Thyroid gland (tissue), 4 donors: ENCODE measurements at regions of chr20 and their contacts with region 1.

Region 1: DNA sequence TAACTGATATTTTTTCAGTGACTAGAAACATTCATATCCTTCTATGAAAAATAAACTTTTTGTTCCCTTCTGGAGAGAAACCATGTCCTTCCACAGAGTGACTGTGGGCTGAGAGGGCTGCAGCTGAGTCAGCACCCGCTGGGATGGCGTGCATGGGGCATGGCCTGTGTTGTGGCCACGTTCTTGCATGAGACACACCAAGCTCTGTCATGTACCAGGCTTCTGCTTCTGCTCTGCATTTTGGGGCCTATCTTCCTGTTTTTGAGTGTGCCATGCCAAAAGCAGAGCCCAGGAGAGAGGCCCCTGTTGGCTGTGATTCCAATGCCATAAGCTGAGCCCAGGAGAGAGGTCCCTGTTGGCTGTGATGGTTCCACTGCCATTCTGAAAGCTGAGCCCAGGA is 10.8 kb downstream of the APMAP start:
- DNase-seq: no peak
- H3K4me3 ChIP-seq: no peak overlapping the region
- H3K27ac ChIP-seq: peak overlapping the region in 1 of 3 donors; percentile 84
- H3K4me1 ChIP-seq: peaks cover 36 to 66% of the 10 kb centered on the region in 2 donors
- H3K27me3 ChIP-seq: no peaks in the 10 kb centered on the region
- CTCF ChIP-seq: no peak
- POLR2A ChIP-seq: no peak

Region 2: DNA sequence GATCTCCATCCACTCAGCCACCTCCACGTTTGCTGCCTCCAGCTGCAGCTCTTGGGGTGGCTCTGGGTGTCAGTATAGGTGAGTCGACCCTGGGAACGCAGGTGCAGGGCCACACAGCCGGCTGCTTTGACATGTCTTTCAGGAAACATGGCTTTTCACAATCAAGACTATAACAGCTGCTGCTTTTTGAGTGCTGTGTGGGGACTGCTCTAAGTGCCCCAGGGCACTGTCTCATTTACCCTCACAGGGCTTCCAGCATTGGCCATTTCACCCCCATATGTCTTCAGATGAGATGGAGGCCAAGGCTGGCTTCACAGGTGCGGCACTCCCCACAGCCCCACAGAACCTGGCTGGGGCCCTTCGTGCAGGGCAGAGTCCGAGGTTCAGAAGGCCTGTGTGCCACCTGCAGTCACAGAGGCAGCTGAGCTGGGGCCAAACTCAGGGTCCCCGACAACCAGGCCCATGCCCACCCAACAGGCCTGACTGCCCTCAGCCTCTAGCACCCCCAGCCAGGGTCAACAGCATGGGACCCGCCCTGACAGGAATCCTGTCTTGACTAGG is 47.6 kb before region 1 on chr20:
- intact Hi-C with region 1: loop called (anchors 10 kb)
- DNase-seq: no peak
- H3K4me3 ChIP-seq: no peak overlapping the region
- H3K27ac ChIP-seq: no peak overlapping the region
- H3K4me1 ChIP-seq: peaks cover 21% of the 10 kb centered on the region in 2 donors
- H3K27me3 ChIP-seq: no peaks in the 10 kb centered on the region
- CTCF ChIP-seq: no peak
- POLR2A ChIP-seq: no peak